ENCODE measurements at regions of chr18 and their contacts with region 1.

Region 1: GRCh38 chr18:37450434-37451132 is 115.0 kb downstream of the CELF4 start:
- DNase-seq: peak; percentile 79 to 86 (median 85)
- H3K4me3 ChIP-seq: no peak overlapping the region
- H3K27ac ChIP-seq: peak overlapping the region in 1 of 2 donors; percentile 44
- H3K4me1 ChIP-seq: peaks cover 40% of the 10 kb centered on the region
- H3K27me3 ChIP-seq: no peaks in the 10 kb centered on the region
- CTCF ChIP-seq: no peak
- EP300 ChIP-seq: no peak
- POLR2A ChIP-seq: no peak

Region 2: DNA sequence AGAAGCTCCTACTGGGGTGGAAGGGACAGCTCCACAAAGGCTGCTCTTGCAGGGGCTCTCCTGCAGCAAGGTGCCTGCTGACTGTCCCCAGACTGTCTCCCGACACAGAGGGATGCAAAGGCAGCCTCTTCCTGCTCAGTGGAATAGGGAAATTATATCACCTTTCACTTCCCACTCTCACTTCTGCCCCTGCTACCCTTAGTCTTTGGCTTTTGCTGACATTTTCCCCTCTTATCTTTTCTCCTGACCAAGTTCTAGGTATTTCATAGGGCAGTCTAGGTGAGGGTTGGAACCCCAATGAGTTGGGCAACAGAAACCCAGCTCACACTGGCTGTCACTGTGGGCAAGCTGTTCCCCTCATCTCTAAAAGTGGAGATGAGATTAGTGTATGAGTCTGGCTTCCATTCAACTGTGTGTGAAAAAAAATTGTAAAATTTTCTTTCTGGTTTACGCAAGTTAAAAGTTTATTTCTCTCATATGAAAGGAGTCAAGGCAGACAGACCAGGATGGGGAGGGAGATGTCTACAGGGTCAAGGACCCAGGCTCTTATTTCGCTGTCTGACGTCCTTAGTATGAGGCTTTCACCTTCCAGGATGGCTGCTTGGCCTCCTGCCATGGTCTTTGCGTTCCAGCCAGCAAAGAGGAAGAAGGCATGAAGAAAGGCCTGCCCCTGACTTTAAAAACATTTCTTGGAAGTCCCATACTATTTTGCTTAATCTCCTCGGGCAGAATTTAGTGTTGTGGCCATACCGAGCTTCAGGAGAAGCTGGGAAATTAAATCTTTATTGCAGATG is 1270.8 kb before region 1 on chr18:
- intact Hi-C with region 1: loop called in 1 of 4 experiments (anchors 10 kb)
- DNase-seq: peak; percentile 97 to 100 (median 99)
- H3K4me3 ChIP-seq: no peak overlapping the region
- H3K27ac ChIP-seq: peak overlapping the region; percentile 53 to 87
- H3K4me1 ChIP-seq: peaks cover 14% of the 10 kb centered on the region
- H3K27me3 ChIP-seq: no peaks in the 10 kb centered on the region
- CTCF ChIP-seq: no peak
- EP300 ChIP-seq: no peak
- POLR2A ChIP-seq: no peak

Region 3: GRCh38 chr18:37266290-37266689 is 184.3 kb before region 1 on chr18:
- intact Hi-C with region 1: no loop called
- DNase-seq: no peak
- H3K4me3 ChIP-seq: no peak overlapping the region
- H3K27ac ChIP-seq: no peak overlapping the region
- H3K4me1 ChIP-seq: no peaks in the 10 kb centered on the region
- H3K27me3 ChIP-seq: no peaks in the 10 kb centered on the region
- CTCF ChIP-seq: no peak
- EP300 ChIP-seq: no peak
- POLR2A ChIP-seq: no peak

Region 4: DNA sequence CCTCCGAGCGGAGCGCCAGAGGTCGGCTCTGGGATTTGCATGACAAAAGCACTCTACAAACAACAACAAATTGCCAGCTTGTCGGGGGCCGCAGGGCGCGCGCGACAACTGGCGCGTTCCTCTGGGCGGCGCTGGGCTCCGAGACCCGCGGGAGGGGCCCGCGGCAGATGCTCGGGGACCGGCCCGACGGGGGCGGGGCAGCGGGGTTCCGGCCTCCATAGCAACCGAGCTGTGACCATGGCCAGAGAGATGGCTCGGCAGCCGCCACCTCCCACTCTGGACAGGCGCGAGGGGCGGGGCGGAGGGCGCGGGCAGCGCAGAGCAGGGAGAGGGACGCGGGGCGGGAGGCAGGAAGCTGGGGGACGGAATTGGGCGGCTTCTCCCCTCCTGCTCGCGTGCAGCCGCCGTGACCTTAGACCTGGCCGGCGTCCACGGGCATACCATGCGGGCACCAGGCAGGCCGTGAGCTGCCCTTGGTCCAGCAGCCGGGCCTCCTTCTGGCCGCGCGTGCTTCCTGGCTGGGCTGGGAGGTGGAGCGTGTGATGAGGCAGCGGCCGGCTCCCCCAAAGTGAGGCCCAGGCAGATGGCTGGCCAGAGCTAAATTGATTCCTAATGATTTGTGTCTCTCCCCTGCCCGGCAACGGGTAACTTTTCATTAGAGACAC is 56.5 kb before region 1 on chr18:
- intact Hi-C with region 1: loop called in 1 of 4 experiments (anchors 10 kb)
- DNase-seq: peak; percentile 72 to 83 (median 76)
- H3K4me3 ChIP-seq: peak overlapping the region; percentile 35
- H3K27ac ChIP-seq: peak overlapping the region in 1 of 2 donors; percentile 16
- H3K4me1 ChIP-seq: peaks cover 14% of the 10 kb centered on the region
- H3K27me3 ChIP-seq: no peaks in the 10 kb centered on the region
- CTCF ChIP-seq: no peak
- EP300 ChIP-seq: no peak
- POLR2A ChIP-seq: no peak

Measured in ovary (tissue), 10 donors.